ENCODE measurements at regions of chr17 and their contacts with region 1.

Region 1: GRCh38 chr17:55959756-55960155 is 193.5 kb upstream of the ANKFN1 start:
- DNase-seq: no peak
- ATAC-seq: no peak
- H3K4me3 ChIP-seq: no peak overlapping the region
- H3K27ac ChIP-seq: no peak overlapping the region
- H3K4me1 ChIP-seq: no peaks in the 10 kb centered on the region
- H3K27me3 ChIP-seq: no peaks in the 10 kb centered on the region
- CTCF ChIP-seq: no peak
- POLR2A ChIP-seq: no peak
- RAD21 ChIP-seq: no peak

Region 2: GRCh38 chr17:55932958-55933357 is 26.8 kb before region 1 on chr17:
- CTCF ChIA-PET with region 1: no interaction called
- POLR2A ChIA-PET with region 1: no interaction called
- dilution Hi-C with region 1: no loop called
- in situ Hi-C with region 1: no loop called
- intact Hi-C with region 1: no loop called
- DNase-seq: no peak
- ATAC-seq: no peak
- H3K4me3 ChIP-seq: no peak overlapping the region
- H3K27ac ChIP-seq: no peak overlapping the region
- H3K4me1 ChIP-seq: no peaks in the 10 kb centered on the region
- H3K27me3 ChIP-seq: no peaks in the 10 kb centered on the region
- CTCF ChIP-seq: no peak
- POLR2A ChIP-seq: no peak
- RAD21 ChIP-seq: no peak

Region 3: GRCh38 chr17:56034201-56034635 is 74.5 kb after region 1 on chr17:
- CTCF ChIA-PET with region 1: no interaction called
- POLR2A ChIA-PET with region 1: no interaction called
- dilution Hi-C with region 1: no loop called
- in situ Hi-C with region 1: no loop called
- intact Hi-C with region 1: no loop called
- DNase-seq: no peak
- ATAC-seq: peak; percentile 44; the same call in 1 of the 2 replicates
- H3K4me3 ChIP-seq: no peak overlapping the region
- H3K27ac ChIP-seq: no peak overlapping the region
- H3K4me1 ChIP-seq: no peaks in the 10 kb centered on the region
- H3K27me3 ChIP-seq: no peaks in the 10 kb centered on the region
- CTCF ChIP-seq: no peak
- POLR2A ChIP-seq: no peak
- RAD21 ChIP-seq: no peak

Region 4: GRCh38 chr17:56540836-56541235 is 581.1 kb after region 1 on chr17:
- CTCF ChIA-PET with region 1: no interaction called
- POLR2A ChIA-PET with region 1: no interaction called
- dilution Hi-C with region 1: no loop called
- in situ Hi-C with region 1: no loop called
- intact Hi-C with region 1: loop called (anchors 5 kb)
- DNase-seq: no peak
- ATAC-seq: no peak; the same call in 1 of the 2 replicates
- H3K4me3 ChIP-seq: no peak overlapping the region
- H3K27ac ChIP-seq: no peak overlapping the region
- H3K4me1 ChIP-seq: no peaks in the 10 kb centered on the region
- H3K27me3 ChIP-seq: no peaks in the 10 kb centered on the region; the same call in 1 of the 2 replicates
- CTCF ChIP-seq: no peak
- POLR2A ChIP-seq: no peak
- RAD21 ChIP-seq: no peak

Measured in IMR-90 (cell line).